IMR-90 (cell line): ENCODE measurements at regions of chr4 and their contacts with region 1.

Region 1: GRCh38 chr4:47122592-47123291 is 91.4 kb downstream of the GABRB1 start:
- DNase-seq: peak; percentile 81
- ATAC-seq: peak; percentile 81
- H3K4me3 ChIP-seq: no peak overlapping the region
- H3K27ac ChIP-seq: no peak overlapping the region
- H3K4me1 ChIP-seq: peaks cover 2% of the 10 kb centered on the region
- H3K27me3 ChIP-seq: no peaks in the 10 kb centered on the region
- CTCF ChIP-seq: peak; percentile 88
- POLR2A ChIP-seq: no peak
- RAD21 ChIP-seq: peak; percentile 84

Region 2: GRCh38 chr4:47032415-47033106 is 90.2 kb before region 1 on chr4:
- CTCF ChIA-PET with region 1: interaction called, 8 read pairs
- POLR2A ChIA-PET with region 1: no interaction called
- dilution Hi-C with region 1: no loop called
- in situ Hi-C with region 1: no loop called
- intact Hi-C with region 1: loop called (anchors 2 kb)
- DNase-seq: peak; percentile 65
- ATAC-seq: peak; percentile 96
- H3K4me3 ChIP-seq: peak overlapping the region; percentile 58
- H3K27ac ChIP-seq: peak overlapping the region; percentile 3; the same call in 1 of the 2 replicates
- H3K4me1 ChIP-seq: no peaks in the 10 kb centered on the region
- H3K27me3 ChIP-seq: no peaks in the 10 kb centered on the region; the same call in 1 of the 2 replicates
- CTCF ChIP-seq: peak; percentile 80
- POLR2A ChIP-seq: no peak
- RAD21 ChIP-seq: peak; percentile 75

Region 3: GRCh38 chr4:47061435-47061834 is 61.3 kb before region 1 on chr4:
- CTCF ChIA-PET with region 1: no interaction called
- POLR2A ChIA-PET with region 1: no interaction called
- dilution Hi-C with region 1: no loop called
- in situ Hi-C with region 1: no loop called
- intact Hi-C with region 1: no loop called
- DNase-seq: peak; percentile 81
- ATAC-seq: peak; percentile 93
- H3K4me3 ChIP-seq: no peak overlapping the region
- H3K27ac ChIP-seq: no peak overlapping the region
- H3K4me1 ChIP-seq: peaks cover 6% of the 10 kb centered on the region; the same call in 1 of the 2 replicates
- H3K27me3 ChIP-seq: no peaks in the 10 kb centered on the region
- CTCF ChIP-seq: no peak
- POLR2A ChIP-seq: no peak
- RAD21 ChIP-seq: no peak

Region 4: GRCh38 chr4:47075241-47075640 is 47.5 kb before region 1 on chr4:
- CTCF ChIA-PET with region 1: interaction called, 11 read pairs
- POLR2A ChIA-PET with region 1: no interaction called
- dilution Hi-C with region 1: no loop called
- in situ Hi-C with region 1: no loop called
- intact Hi-C with region 1: no loop called
- DNase-seq: peak; percentile 54
- ATAC-seq: no peak
- H3K4me3 ChIP-seq: no peak overlapping the region
- H3K27ac ChIP-seq: no peak overlapping the region
- H3K4me1 ChIP-seq: peaks cover 10% of the 10 kb centered on the region; the same call in 1 of the 2 replicates
- H3K27me3 ChIP-seq: no peaks in the 10 kb centered on the region
- CTCF ChIP-seq: no peak
- POLR2A ChIP-seq: no peak
- RAD21 ChIP-seq: no peak

Region 5: GRCh38 chr4:47774079-47774478 is 651.3 kb after region 1 on chr4:
- CTCF ChIA-PET with region 1: no interaction called
- POLR2A ChIA-PET with region 1: no interaction called
- dilution Hi-C with region 1: no loop called
- in situ Hi-C with region 1: no loop called
- intact Hi-C with region 1: no loop called
- DNase-seq: no peak
- ATAC-seq: no peak
- H3K4me3 ChIP-seq: no peak overlapping the region
- H3K27ac ChIP-seq: no peak overlapping the region
- H3K4me1 ChIP-seq: no peaks in the 10 kb centered on the region
- H3K27me3 ChIP-seq: no peaks in the 10 kb centered on the region
- CTCF ChIP-seq: no peak
- POLR2A ChIP-seq: no peak
- RAD21 ChIP-seq: no peak